ENCODE measurements at regions of chr2 and their contacts with region 1.

Region 1: GRCh38 chr2:68487773-68488355 is 20.5 kb downstream of the APLF start:
- DNase-seq: no peak
- H3K4me3 ChIP-seq: no peak overlapping the region
- H3K4me3 Mint-ChIP-seq: no peak overlapping the region
- H3K27ac Mint-ChIP-seq: no peak overlapping the region
- H3K4me1 ChIP-seq: no peaks in the 10 kb centered on the region
- H3K4me1 Mint-ChIP-seq: no peaks in the 10 kb centered on the region
- H3K27me3 ChIP-seq: no peaks in the 10 kb centered on the region
- H3K27me3 Mint-ChIP-seq: no peaks in the 10 kb centered on the region
- CTCF ChIP-seq: peak; percentile 43 to 52

Region 2: DNA sequence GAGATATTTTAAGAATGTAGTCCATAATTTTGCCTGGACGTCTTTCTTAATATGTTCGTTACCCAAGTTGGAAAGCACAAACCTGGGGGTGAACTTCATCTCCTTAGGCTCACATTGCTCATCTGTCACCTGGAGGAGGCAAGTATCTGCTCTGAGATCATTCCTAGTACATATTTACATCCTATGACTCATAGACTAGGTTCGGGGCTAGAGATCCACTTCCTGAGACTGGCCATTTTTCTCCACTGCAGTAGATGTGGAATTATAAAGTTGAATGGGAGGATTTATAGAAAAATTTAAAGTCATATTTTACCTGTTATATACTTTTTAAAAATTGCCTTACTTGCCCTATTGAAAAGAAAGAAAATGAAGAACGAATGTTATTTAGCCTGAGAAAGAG is 78.0 kb after region 1 on chr2:
- CTCF ChIA-PET with region 1: no interaction called
- POLR2A ChIA-PET with region 1: no interaction called
- intact Hi-C with region 1: no loop called
- DNase-seq: no peak
- H3K4me3 ChIP-seq: no peak overlapping the region
- H3K4me3 Mint-ChIP-seq: no peak overlapping the region
- H3K27ac Mint-ChIP-seq: no peak overlapping the region
- H3K4me1 ChIP-seq: no peaks in the 10 kb centered on the region
- H3K4me1 Mint-ChIP-seq: no peaks in the 10 kb centered on the region
- H3K27me3 ChIP-seq: no peaks in the 10 kb centered on the region
- H3K27me3 Mint-ChIP-seq: no peaks in the 10 kb centered on the region
- CTCF ChIP-seq: no peak

Region 3: DNA sequence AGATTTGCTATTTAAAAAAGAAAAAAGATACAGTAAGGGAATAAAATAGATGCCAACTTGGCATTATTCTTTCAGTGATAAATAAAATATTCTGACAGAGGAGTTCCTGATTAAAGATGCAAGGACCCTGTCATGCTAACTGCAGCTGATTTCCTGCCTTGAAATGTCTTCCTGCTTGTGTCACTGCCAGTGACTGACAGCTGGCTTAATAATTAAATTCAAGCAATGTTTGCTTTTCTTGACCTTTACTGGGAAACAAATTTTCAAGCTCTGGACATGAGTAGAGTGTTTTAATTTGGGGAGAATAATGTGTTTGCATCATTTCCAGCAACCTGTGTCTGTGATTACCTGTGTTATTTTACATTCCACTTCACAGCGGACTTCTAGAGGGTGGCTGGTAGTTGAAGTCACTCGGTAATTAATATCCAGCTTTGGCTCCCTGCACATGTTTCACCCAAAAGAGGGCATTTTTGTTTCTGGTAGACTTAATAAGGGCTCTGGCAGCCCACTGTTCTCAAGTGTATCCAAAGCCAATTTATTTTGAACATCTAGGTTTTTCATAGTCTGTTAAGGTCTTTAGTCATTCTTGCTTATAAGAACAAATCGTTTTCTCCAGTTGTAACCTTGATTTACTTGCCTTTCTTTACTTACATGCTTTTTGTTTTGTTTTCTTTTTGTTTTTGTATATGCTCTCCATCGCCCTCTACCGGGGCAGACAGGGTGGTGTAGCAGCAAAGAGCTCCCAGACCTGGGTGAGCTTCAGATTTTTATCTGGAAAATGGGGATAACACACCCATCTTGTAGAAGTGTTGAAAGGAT is 107.0 kb after region 1 on chr2:
- CTCF ChIA-PET with region 1: interaction called, 18 read pairs
- POLR2A ChIA-PET with region 1: no interaction called
- intact Hi-C with region 1: loop called (anchors 1 kb)
- DNase-seq: peak; percentile 37 to 61
- H3K4me3 ChIP-seq: no peak overlapping the region
- H3K4me3 Mint-ChIP-seq: peak overlapping the region; percentile 6
- H3K27ac Mint-ChIP-seq: no peak overlapping the region
- H3K4me1 ChIP-seq: peaks cover 9% of the 10 kb centered on the region
- H3K4me1 Mint-ChIP-seq: peaks cover 7% of the 10 kb centered on the region
- H3K27me3 ChIP-seq: no peaks in the 10 kb centered on the region
- H3K27me3 Mint-ChIP-seq: no peaks in the 10 kb centered on the region
- CTCF ChIP-seq: peak; percentile 71 to 72

Region 4: GRCh38 chr2:68646302-68646701 is 158.4 kb after region 1 on chr2:
- CTCF ChIA-PET with region 1: interaction called, 17 read pairs
- POLR2A ChIA-PET with region 1: no interaction called
- intact Hi-C with region 1: loop called (anchors 1 kb)
- DNase-seq: peak in 1 of 2 experiments; percentile 19
- H3K4me3 ChIP-seq: no peak overlapping the region
- H3K4me3 Mint-ChIP-seq: no peak overlapping the region
- H3K27ac Mint-ChIP-seq: no peak overlapping the region
- H3K4me1 ChIP-seq: no peaks in the 10 kb centered on the region
- H3K4me1 Mint-ChIP-seq: no peaks in the 10 kb centered on the region
- H3K27me3 ChIP-seq: peaks cover 5% of the 10 kb centered on the region
- H3K27me3 Mint-ChIP-seq: peaks cover 44% of the 10 kb centered on the region
- CTCF ChIP-seq: peak in 1 of 2 experiments; percentile 27

Region 5: DNA sequence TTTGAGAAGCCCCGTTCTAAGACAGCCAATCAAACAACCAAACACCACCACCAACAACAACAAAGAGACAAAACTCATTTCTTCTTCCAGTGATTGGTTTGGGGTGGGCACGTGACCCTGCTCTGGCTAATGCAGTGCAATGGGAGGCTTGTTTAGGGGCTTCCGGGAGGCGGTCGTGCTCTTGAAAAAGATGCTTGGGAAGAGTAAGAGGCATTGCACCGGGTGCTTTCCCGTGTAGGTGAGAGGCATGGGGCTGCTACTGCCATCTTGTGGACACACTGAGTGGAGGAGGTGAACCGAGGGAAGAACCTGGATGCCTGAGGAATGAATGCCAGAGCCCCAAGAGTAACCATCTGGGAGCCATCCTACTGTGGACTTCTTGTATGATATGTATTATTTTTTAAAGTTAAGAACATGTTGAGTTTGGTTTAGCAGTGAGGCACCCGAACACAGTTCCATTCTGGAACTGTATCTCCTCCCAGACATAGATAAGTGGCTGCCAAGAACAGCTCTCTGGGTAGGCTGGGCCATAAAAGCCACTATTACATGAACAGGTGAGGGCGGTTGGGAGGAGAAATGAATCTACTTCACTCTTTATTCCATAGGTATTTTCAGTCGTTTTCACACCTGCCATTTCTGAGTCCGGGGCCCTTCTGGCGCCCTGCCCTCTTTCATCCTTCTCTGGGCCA is 227.6 kb after region 1 on chr2:
- CTCF ChIA-PET with region 1: interaction called, 7 read pairs
- POLR2A ChIA-PET with region 1: no interaction called
- intact Hi-C with region 1: loop called (anchors 1 kb)
- DNase-seq: peak; percentile 75 to 78
- H3K4me3 ChIP-seq: no peak overlapping the region
- H3K4me3 Mint-ChIP-seq: no peak overlapping the region
- H3K27ac Mint-ChIP-seq: no peak overlapping the region
- H3K4me1 ChIP-seq: no peaks in the 10 kb centered on the region; the same call in 1 of the 2 replicates
- H3K4me1 Mint-ChIP-seq: no peaks in the 10 kb centered on the region
- H3K27me3 ChIP-seq: 0 out of 2 replicates have a peak, but pooled peaks cover 2% of the 10 kb centered on the region
- H3K27me3 Mint-ChIP-seq: peaks cover 17% of the 10 kb centered on the region
- CTCF ChIP-seq: peak; percentile 72 to 91